Heart right ventricle (tissue), 16 donors: ENCODE measurements at regions of chr22 and their contacts with region 1.

Region 1: DNA sequence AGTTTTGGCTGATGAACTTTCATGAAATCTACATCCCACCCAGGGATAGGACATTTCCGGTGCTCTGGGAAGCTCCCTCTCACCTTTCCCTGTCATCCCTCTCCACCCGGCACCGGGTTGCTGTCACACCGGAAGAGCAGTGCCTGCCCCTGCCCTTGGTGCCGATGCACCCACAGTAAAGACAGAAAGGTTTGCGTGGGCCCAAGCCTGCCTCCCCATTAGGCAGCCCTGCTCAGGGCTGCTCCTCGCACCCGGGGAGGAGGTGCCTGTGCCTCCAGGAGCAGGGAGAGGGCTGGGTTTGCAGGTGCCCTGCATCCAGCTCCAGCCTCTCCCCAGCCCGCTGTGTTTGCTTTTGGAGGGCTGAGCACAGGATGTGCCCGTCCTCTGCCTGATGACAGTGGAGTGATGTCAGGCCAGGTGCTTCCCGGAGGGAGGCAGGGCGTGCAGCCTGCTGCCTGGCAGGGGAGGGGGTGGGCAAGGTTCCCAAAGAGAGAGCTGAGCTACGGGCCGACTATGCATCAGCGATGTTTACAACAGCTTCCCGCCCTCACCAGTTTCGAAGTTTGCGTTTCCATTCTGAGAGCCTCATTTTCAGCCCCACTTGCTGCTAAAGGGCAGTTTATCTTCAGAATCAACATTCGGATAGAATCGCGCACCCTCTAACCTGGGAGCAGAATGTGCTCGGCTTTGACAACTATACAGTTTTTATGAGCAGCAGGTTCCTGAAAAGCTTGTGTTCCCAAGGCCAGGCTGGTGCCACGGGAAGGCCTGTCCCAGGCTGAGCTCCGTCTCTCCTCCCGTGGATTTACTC is 83.2 kb upstream of the CLDN5 start:
- DNase-seq: peak in 1 of 2 donors; percentile 23
- ATAC-seq: peak in 7 of 8 donors; percentile 40 to 83 (median 65)
- H3K4me3 ChIP-seq: no peak overlapping the region
- H3K27ac ChIP-seq: peak overlapping the region in 2 of 10 donors; percentile 26 to 48
- H3K4me1 ChIP-seq: peaks cover 0 to 27% (median 13%) of the 10 kb centered on the region in 9 donors
- H3K27me3 ChIP-seq: peaks cover 4 to 30% (median 8%) of the 10 kb centered on the region in 7 donors
- CTCF ChIP-seq: no peak

Region 2: GRCh38 chr22:19514831-19515565 is 92.4 kb before region 1 on chr22:
- intact Hi-C with region 1: loop called in 1 of 10 experiments (anchors 5 kb)
- DNase-seq: no peak
- ATAC-seq: no peak
- H3K4me3 ChIP-seq: no peak overlapping the region
- H3K27ac ChIP-seq: no peak overlapping the region
- H3K4me1 ChIP-seq: peaks cover 0 to 11% (median 0%) of the 10 kb centered on the region in 9 donors
- H3K27me3 ChIP-seq: no peaks in the 10 kb centered on the region
- CTCF ChIP-seq: no peak